Activated CD8-positive, alpha-beta T cell treated with anti-CD3 and anti-CD28 coated beads for 36 hours (primary cell): ENCODE measurements at regions of chr7 and their contacts with region 1.

Region 1: GRCh38 chr7:43758029-43758821 is at the start of gene BLVRA:
- DNase-seq: peak; percentile 57
- ATAC-seq: peak; percentile 75
- H3K4me3 Mint-ChIP-seq: peak within 1 kb of the TSS; percentile 80
- H3K27ac Mint-ChIP-seq: peak within 1 kb of the TSS; percentile 58
- H3K4me1 Mint-ChIP-seq: peaks cover 43% of the 10 kb centered on the region
- H3K27me3 Mint-ChIP-seq: peaks cover 10% of the 10 kb centered on the region
- CTCF ChIP-seq: no peak
- total RNA-seq, gene BLVRA: 30.9 to 34.2 TPM

Region 2: GRCh38 chr7:43735802-43736541 is 22.3 kb before region 1 on chr7:
- CTCF ChIA-PET with region 1: interaction called, 8 read pairs
- POLR2A ChIA-PET with region 1: interaction called, 10 read pairs
- intact Hi-C with region 1: no loop called
- DNase-seq: peak; percentile 80
- ATAC-seq: peak; percentile 96
- H3K4me3 Mint-ChIP-seq: no peak overlapping the region
- H3K27ac Mint-ChIP-seq: peak overlapping the region; percentile 65
- H3K4me1 Mint-ChIP-seq: peaks cover 14% of the 10 kb centered on the region
- H3K27me3 Mint-ChIP-seq: peaks cover 2% of the 10 kb centered on the region
- CTCF ChIP-seq: no peak

Region 3: GRCh38 chr7:43808135-43808809 is 50.0 kb after region 1 on chr7:
- CTCF ChIA-PET with region 1: no interaction called
- POLR2A ChIA-PET with region 1: no interaction called
- intact Hi-C with region 1: no loop called
- DNase-seq: no peak
- ATAC-seq: no peak
- H3K4me3 Mint-ChIP-seq: no peak overlapping the region
- H3K27ac Mint-ChIP-seq: no peak overlapping the region
- H3K4me1 Mint-ChIP-seq: no peaks in the 10 kb centered on the region
- H3K27me3 Mint-ChIP-seq: no peaks in the 10 kb centered on the region
- CTCF ChIP-seq: no peak